Activated naive CD4-positive, alpha-beta T cell treated with anti-CD3 and anti-CD28 coated beads for 36 hours (primary cell): ENCODE measurements at regions of chr1 and their contacts with region 1.

Region 1: DNA sequence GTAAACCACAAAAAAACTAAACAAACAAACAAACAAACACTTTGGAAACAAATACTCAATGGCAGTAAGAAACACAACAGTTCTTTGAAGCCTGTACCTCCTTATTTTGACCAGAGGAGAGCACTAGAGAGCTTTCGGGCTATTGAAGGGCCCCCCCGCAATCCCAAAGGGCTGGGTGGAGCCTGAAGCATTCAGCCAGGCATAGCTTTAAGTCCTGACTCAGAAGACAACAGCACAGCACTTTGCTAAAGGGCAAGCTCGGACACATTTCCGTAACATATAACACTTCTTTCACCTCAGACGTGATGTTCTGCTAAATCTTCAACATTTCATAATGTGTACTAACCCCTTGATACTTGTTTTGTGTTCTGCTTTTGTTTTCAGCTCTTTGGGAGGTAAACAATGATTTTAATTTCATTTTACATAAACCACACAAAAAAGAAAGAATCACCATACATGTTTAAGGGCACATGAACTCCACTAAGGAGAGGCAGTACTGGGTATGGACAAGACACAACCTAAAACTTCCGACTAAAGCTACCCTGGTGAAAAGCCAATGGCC is 9.7 kb upstream of the SHCBP1L start:
- DNase-seq: peak; percentile 64
- H3K4me3 Mint-ChIP-seq: no peak overlapping the region
- H3K27ac Mint-ChIP-seq: no peak overlapping the region
- H3K4me1 Mint-ChIP-seq: peaks cover 4% of the 10 kb centered on the region
- H3K27me3 Mint-ChIP-seq: peaks cover 10% of the 10 kb centered on the region

Region 2: DNA sequence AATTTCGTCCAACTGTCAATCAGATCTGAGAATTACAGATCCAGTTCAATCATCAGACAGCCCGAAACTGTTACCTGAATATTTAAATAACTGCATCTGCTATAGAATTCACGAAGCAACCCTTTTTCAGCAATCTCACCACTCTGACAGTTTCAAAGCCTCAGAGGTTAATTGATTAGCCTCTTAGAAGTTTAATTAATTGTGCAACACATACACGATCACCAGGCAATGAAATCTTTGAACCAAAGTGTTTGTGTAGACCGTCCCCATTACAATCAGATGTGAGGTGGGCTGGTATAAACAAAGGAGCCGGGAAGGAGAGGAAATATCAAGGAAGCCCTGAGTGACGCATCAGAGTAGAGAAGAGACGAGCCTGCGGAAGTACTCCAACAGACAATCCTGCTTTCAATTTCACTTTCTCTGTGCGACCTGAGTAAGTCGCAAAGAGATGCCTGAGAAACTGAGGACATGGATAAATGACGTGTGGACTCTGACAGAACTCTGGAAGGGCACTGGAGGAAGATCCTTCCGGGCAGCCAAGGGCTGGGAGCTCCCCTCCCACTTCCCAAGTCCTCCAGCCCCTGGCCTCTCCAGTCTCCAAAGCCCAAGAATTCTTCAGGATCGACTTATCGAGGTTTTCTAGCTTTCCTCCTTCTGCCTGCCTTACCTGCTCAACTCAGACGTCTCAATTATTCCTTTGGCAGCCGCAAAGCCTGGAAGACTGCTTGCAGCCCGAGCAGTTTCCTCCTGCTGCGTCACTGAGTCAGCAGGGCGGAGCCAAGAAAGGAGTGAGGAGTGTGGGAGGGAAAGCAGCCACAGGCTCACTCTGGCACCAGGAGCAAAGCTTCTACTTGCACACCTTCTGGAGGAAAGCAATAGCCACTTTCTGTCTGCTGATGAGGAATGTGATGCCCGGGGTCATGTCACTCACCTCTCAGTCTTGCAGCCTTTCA is 373.9 kb before region 1 on chr1 and contains the start of gene RNASEL:
- CTCF ChIA-PET with region 1: no interaction called
- intact Hi-C with region 1: loop called (anchors 5 kb)
- DNase-seq: peak; percentile 62
- H3K4me3 Mint-ChIP-seq: peak within 1 kb of the TSS; percentile 86
- H3K27ac Mint-ChIP-seq: peak within 1 kb of the TSS; percentile 98
- H3K4me1 Mint-ChIP-seq: peaks cover 49% of the 10 kb centered on the region
- H3K27me3 Mint-ChIP-seq: no peaks in the 10 kb centered on the region
- total RNA-seq, gene RNASEL: 2.5 TPM

Region 3: GRCh38 chr1:183180634-183181056 is 218.0 kb after region 1 on chr1:
- CTCF ChIA-PET with region 1: no interaction called
- intact Hi-C with region 1: loop called (anchors 10 kb)
- DNase-seq: peak; percentile 67
- H3K4me3 Mint-ChIP-seq: no peak overlapping the region
- H3K27ac Mint-ChIP-seq: no peak overlapping the region
- H3K4me1 Mint-ChIP-seq: peaks cover 11% of the 10 kb centered on the region
- H3K27me3 Mint-ChIP-seq: peaks cover 9% of the 10 kb centered on the region

Region 4: DNA sequence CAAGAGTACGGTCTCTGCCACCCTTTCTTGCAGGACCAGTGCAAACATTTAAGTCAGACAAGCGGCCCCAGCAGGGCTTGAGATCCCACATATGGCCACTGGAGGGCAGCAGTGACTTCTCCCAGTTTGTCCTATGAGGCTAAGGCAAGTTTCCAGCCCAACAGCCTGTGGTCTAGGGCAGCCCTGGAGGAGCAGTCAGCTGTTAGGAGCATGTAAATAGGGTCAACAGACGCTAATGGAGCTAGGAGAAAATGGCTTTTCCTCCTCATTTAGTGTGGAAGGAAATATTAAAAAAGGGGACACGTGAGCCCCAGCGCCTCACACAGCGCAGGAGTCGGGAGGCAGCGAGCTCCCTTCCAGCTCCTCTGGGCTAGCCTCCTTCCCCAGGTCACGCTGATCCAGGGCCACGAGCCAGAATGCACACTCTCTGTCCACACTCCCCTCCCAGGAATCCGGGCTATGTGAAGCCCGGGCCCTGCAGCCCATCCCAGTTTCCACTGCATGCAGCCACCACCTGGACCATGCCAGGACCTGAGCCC is 319.0 kb after region 1 on chr1:
- CTCF ChIA-PET with region 1: interaction called, 3 read pairs
- intact Hi-C with region 1: loop called (anchors 5 kb)
- DNase-seq: peak; percentile 88
- H3K4me3 Mint-ChIP-seq: no peak overlapping the region
- H3K27ac Mint-ChIP-seq: no peak overlapping the region
- H3K4me1 Mint-ChIP-seq: no peaks in the 10 kb centered on the region
- H3K27me3 Mint-ChIP-seq: no peaks in the 10 kb centered on the region

Region 5: GRCh38 chr1:183543619-183544204 is 581.1 kb after region 1 on chr1:
- CTCF ChIA-PET with region 1: no interaction called
- intact Hi-C with region 1: loop called (anchors 10 kb)
- DNase-seq: no peak
- H3K4me3 Mint-ChIP-seq: no peak overlapping the region
- H3K27ac Mint-ChIP-seq: peak overlapping the region; percentile 43
- H3K4me1 Mint-ChIP-seq: no peaks in the 10 kb centered on the region
- H3K27me3 Mint-ChIP-seq: no peaks in the 10 kb centered on the region

Region 6: GRCh38 chr1:183685112-183685713 is 722.6 kb after region 1 on chr1:
- CTCF ChIA-PET with region 1: no interaction called
- intact Hi-C with region 1: loop called (anchors 5 kb)
- DNase-seq: peak; percentile 41
- H3K4me3 Mint-ChIP-seq: no peak overlapping the region
- H3K27ac Mint-ChIP-seq: no peak overlapping the region
- H3K4me1 Mint-ChIP-seq: peaks cover 8% of the 10 kb centered on the region
- H3K27me3 Mint-ChIP-seq: no peaks in the 10 kb centered on the region